GM13976 (cell line): ENCODE measurements at regions of chr3 and their contacts with region 1.

Region 1: DNA sequence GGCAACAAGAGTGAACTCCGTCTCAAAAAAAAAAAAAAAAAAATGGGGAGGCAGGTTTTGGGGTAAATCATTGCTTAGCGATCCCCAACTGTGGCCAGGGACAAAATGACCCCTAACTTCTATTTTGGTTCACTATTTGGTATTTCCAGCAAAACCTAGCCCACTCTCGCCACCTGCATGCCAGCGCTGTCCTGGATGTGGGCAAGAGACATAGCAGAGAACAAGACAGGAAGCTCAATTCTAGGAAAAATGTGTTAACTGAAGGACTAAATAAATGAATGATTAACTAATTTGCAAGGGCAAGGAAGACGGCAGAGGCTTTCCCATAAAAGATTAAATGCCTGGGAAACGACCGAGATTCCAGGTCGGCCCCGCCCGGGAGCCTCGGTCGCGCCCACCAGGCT is 425 bp downstream of the NICN1 start:
- DNase-seq: peak; percentile 36
- CTCF ChIP-seq: no peak

Region 2: GRCh38 chr3:49171119-49171774 is 257.5 kb before region 1 on chr3 and contains the start of gene KLHDC8B:
- in situ Hi-C with region 1: loop called (anchors 25 kb)
- DNase-seq: peak; percentile 94
- CTCF ChIP-seq: peak; percentile 93